IMR-90 (cell line): ENCODE measurements at regions of chr5 and their contacts with region 1.

Region 1: DNA sequence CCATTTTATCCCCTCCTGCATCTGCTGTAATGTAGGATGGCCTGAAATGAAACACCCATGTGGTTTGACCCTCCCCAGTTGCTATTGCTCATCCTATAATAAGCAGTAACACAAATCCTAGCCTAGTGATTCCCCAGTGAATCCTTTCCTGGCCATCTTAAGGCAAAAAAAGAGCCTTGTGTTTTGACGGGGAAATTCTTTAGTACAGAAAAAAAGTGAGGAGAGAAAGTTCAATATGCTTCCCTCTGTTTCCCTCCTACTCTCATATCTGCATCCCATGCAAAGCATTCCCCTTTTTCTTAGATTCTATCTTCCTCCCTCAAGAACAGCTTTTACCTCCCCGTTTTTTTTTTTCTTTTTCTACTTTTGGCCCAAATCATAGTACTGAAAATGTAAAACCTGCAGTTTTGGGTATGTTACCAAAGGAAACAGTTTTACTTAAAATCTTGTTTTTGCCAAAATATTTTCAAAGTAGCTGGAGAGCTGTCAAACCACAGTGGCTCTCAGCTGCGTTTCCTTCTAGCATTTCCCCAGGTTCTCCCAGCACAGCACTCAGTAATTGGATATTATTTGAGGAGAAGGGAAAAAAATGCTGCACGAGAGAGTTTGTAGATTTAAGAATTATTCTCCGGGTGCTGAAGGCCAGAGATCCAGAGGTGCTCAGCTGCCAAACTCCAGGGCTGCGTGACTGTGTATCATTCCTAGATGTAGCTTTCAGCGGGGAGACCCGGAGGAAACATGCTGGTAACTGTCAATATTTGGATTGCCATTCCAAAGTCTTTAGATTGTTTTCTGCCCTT is 321.4 kb downstream of the NPR3 start:
- DNase-seq: peak; percentile 73
- ATAC-seq: peak; percentile 75
- H3K4me3 ChIP-seq: no peak overlapping the region
- H3K27ac ChIP-seq: peak overlapping the region; percentile 18; the same call in 1 of the 2 replicates
- H3K4me1 ChIP-seq: peaks cover 4% of the 10 kb centered on the region
- H3K27me3 ChIP-seq: no peaks in the 10 kb centered on the region
- CTCF ChIP-seq: no peak
- POLR2A ChIP-seq: no peak
- RAD21 ChIP-seq: no peak

Region 2: GRCh38 chr5:32964261-32964660 is 68.2 kb before region 1 on chr5:
- CTCF ChIA-PET with region 1: no interaction called
- POLR2A ChIA-PET with region 1: interaction called, 10 read pairs
- dilution Hi-C with region 1: no loop called
- in situ Hi-C with region 1: no loop called
- intact Hi-C with region 1: loop called (anchors 1 kb)
- DNase-seq: peak; percentile 59
- ATAC-seq: peak; percentile 86
- H3K4me3 ChIP-seq: no peak overlapping the region
- H3K27ac ChIP-seq: no peak overlapping the region
- H3K4me1 ChIP-seq: peaks cover 1% of the 10 kb centered on the region; the same call in 1 of the 2 replicates
- H3K27me3 ChIP-seq: no peaks in the 10 kb centered on the region
- CTCF ChIP-seq: no peak
- POLR2A ChIP-seq: no peak
- RAD21 ChIP-seq: no peak